ENCODE measurements at regions of chr10 and their contacts with region 1.

Region 1: DNA sequence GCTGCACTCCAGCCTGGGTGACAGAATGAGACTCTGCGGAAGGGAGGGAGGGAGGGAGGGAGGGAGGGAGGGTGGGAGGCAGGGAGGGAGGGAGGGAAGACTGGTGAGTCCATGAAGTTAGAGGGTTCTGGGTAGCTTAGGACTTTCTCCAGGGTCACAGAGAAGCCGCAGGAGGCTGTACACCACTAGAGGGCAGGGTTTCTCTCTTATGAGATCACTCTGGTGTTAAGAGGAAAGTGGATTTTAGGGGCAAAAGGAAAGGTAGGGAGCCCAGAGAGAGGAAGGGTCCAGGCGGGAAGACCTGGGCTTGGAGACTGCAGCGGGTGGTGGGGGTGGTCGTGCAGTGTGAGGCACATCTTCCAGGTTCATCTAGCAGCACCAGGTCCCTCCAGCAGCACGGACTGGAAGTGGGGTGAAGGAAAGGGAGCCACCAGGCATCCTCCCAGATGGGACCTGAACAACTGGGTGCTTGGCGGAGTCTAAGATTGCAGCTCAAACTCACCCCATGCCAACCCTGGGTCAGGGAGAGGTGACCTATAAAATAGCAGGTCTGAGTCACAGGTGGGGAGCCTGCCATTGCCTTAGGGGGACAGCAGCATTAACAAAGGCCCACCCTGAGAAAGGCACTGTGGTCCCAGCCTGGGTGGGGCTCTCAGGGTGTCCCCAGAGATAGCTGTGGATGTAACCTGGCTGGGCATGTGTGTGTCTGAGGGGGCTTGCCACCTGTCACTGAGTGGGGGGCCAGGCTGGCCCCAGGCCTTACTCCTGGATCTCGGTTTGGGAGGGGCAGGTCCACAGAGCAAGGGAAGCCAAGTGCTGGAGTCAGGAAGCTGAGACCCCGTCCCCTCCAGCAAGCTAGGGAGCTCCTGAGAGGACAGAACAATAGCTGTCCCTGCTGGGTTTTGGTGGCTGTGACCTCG is 48.5 kb upstream of the SLC29A3 start:
- DNase-seq: peak in 1 of 2 experiments; percentile 56
- H3K4me3 ChIP-seq: no peak overlapping the region
- H3K27ac ChIP-seq: no peak overlapping the region
- H3K4me1 ChIP-seq: peaks cover 6% of the 10 kb centered on the region
- H3K27me3 ChIP-seq: no peaks in the 10 kb centered on the region
- CTCF ChIP-seq: peak; percentile 76

Region 2: GRCh38 chr10:70903262-70903921 is 367.2 kb before region 1 on chr10:
- CTCF ChIA-PET with region 1: interaction called, 4 read pairs
- POLR2A ChIA-PET with region 1: no interaction called
- intact Hi-C with region 1: loop called (anchors 5 kb)
- DNase-seq: peak in 1 of 2 experiments; percentile 55
- H3K4me3 ChIP-seq: no peak overlapping the region
- H3K27ac ChIP-seq: no peak overlapping the region
- H3K4me1 ChIP-seq: 0 out of 2 replicates have a peak, but pooled peaks cover 5% of the 10 kb centered on the region
- H3K27me3 ChIP-seq: peaks cover 28% of the 10 kb centered on the region; the same call in 1 of the 2 replicates
- CTCF ChIP-seq: peak; percentile 99

Region 3: DNA sequence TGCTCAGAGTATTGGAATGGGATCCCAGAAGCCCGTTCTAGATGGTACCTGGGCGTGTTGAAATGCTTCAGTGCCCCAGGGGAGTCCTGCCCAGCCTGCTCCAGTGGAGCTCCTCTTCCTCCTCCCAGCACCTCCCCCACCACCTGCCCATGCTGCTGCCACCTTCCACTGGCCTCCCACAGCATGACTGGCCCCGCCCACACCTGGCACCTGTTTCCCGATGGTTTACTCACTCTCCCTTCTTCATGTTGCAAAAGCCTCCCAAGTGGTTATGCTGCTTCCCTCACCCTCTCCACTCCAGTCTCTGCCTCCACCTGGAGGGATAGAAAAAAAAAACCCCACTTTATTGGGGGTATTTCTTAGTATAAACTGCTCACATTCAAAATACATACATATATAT is 350.0 kb before region 1 on chr10:
- CTCF ChIA-PET with region 1: interaction called, 4 read pairs
- POLR2A ChIA-PET with region 1: no interaction called
- intact Hi-C with region 1: loop called (anchors 5 kb)
- DNase-seq: peak; percentile 87 to 93
- H3K4me3 ChIP-seq: no peak overlapping the region
- H3K27ac ChIP-seq: no peak overlapping the region
- H3K4me1 ChIP-seq: peaks cover 27% of the 10 kb centered on the region
- H3K27me3 ChIP-seq: peaks cover 27% of the 10 kb centered on the region
- CTCF ChIP-seq: 0 out of 2 replicates have a peak, but pooled peaks have one; percentile 20

Region 4: GRCh38 chr10:71014021-71014805 is 256.3 kb before region 1 on chr10:
- CTCF ChIA-PET with region 1: interaction called, 16 read pairs
- POLR2A ChIA-PET with region 1: no interaction called
- intact Hi-C with region 1: no loop called
- DNase-seq: no peak
- H3K4me3 ChIP-seq: no peak overlapping the region
- H3K27ac ChIP-seq: no peak overlapping the region
- H3K4me1 ChIP-seq: no peaks in the 10 kb centered on the region
- H3K27me3 ChIP-seq: peaks cover 97% of the 10 kb centered on the region
- CTCF ChIP-seq: no peak

Region 5: DNA sequence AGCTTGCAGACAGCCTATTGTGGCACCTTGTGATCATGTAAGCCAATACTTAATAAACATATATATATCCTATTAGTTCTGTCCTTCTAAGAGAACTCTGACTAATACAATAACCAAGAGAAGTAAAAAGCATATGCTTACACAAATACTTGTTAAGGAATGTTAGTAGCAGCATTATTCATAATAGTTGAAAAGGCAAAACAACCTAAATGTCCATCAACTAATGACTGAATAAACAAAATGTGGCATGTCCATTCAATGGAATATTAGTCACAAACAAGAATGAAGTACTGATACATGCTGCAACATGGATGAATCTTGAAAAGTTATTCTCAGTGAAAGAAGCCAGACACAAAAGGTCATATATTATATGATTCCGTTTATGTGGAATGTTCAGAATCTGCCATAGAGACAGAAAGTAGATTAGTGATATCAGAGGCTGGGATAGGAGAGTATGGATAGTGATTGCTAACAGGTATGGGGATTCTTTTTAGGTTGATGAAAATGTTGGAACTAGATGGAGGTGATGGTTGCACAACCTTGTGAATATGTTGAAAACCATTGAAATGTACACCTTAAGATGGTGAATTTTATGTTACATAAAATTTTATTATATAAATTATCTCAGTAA is 170.7 kb before region 1 on chr10:
- CTCF ChIA-PET with region 1: no interaction called
- POLR2A ChIA-PET with region 1: no interaction called
- intact Hi-C with region 1: no loop called
- DNase-seq: no peak
- H3K4me3 ChIP-seq: no peak overlapping the region
- H3K27ac ChIP-seq: no peak overlapping the region
- H3K4me1 ChIP-seq: no peaks in the 10 kb centered on the region
- H3K27me3 ChIP-seq: peaks cover 33% of the 10 kb centered on the region
- CTCF ChIP-seq: no peak

Region 6: DNA sequence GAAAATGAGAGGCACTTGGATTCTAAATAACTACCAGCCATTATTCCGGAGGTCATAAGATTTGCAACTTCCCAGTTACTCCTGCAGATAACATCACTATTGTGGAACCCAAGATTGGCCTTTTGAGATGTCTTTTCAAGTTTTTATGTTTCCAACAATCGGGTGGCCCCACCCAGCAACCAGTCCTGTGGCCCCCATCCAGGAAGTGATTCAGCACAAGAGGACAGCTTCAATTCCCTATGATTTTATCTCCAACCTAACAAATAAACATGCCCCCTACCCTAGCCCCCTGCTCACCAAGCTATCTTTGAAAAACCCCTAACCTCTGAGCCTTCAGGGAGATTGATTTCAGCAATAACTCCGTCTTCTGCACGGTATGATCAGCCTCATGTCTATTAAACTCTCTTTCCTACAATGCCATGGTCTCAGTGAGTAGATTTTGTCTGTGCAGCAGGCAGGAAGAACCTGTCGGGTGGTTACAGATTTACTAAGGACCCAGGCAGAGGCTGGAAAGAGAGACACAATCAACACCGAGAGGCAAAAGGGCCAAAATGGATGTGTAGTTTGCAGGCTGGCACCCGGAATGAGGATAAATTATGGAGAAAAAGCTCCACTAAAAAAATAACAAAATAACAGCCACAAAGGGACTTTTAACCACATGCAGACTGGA is 142.1 kb before region 1 on chr10:
- CTCF ChIA-PET with region 1: no interaction called
- POLR2A ChIA-PET with region 1: no interaction called
- intact Hi-C with region 1: no loop called
- DNase-seq: peak in 1 of 2 experiments; percentile 17
- H3K4me3 ChIP-seq: no peak overlapping the region
- H3K27ac ChIP-seq: no peak overlapping the region
- H3K4me1 ChIP-seq: no peaks in the 10 kb centered on the region
- H3K27me3 ChIP-seq: peaks cover 52% of the 10 kb centered on the region
- CTCF ChIP-seq: no peak